A673 (cell line): ENCODE measurements at regions of chr1 and their contacts with region 1.

Region 1: DNA sequence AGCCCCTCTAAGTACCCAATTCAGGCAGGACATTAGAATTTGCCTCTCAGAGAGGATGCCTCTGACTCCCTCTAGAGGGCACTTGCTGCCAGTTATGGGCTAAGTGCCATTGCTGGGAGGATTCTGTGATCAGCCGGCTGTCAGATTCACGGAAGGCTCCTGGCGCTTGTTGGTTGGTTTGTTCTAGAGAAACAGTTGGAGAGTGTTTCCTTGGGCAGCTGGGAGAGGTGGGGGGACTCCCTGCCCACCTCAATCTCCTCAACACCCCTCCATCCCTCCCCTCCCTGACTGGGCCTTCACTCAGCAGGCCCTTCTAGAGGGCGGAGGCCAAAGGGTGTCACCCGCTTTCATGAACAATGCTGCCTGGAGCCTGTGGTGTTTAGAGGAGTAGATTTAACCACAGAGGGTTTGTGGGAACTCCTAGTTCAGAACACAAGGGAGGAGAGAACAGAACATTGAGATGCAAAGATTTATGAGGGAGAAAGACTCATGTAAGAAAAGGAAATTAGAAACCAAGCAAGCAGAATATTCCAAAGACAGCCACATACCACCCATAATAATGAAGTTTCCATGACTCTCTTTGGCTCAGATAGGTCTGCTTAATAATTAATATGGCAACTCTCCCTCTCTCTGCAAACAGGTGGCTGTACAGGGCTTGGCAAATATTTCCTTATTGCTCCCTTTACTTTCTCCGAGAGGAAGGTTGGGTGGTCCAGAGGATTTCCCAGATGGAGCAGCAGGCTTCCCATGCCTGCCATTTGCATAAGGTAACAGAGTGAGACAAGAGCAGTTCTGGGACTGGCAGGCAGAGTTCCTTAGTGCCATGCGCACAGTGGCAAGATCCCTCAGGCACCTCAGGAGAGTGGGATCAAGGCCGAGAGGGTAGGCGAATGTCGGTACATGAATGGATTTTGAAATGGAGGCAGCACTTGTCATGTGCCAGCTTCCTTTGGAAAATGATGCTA is 30.0 kb upstream of the ACP6 start:
- DNase-seq: peak; percentile 82
- H3K4me3 ChIP-seq: no peak overlapping the region
- H3K27ac ChIP-seq: no peak overlapping the region
- H3K4me1 ChIP-seq: no peaks in the 10 kb centered on the region
- H3K27me3 ChIP-seq: no peaks in the 10 kb centered on the region
- CTCF ChIP-seq: peak; percentile 92

Region 2: GRCh38 chr1:147640553-147641165 is 59.7 kb before region 1 on chr1:
- CTCF ChIA-PET with region 1: no interaction called
- POLR2A ChIA-PET with region 1: no interaction called
- intact Hi-C with region 1: loop called (anchors 2 kb)
- DNase-seq: peak; percentile 91
- H3K4me3 ChIP-seq: no peak overlapping the region
- H3K27ac ChIP-seq: no peak overlapping the region
- H3K4me1 ChIP-seq: no peaks in the 10 kb centered on the region
- H3K27me3 ChIP-seq: no peaks in the 10 kb centered on the region
- CTCF ChIP-seq: peak; percentile 81

Region 3: GRCh38 chr1:147762233-147763024 is 62.1 kb after region 1 on chr1:
- CTCF ChIA-PET with region 1: no interaction called
- POLR2A ChIA-PET with region 1: no interaction called
- intact Hi-C with region 1: loop called (anchors 10 kb)
- DNase-seq: peak; percentile 25
- H3K4me3 ChIP-seq: no peak overlapping the region
- H3K27ac ChIP-seq: no peak overlapping the region
- H3K4me1 ChIP-seq: no peaks in the 10 kb centered on the region
- H3K27me3 ChIP-seq: no peaks in the 10 kb centered on the region
- CTCF ChIP-seq: no peak

Region 4: GRCh38 chr1:147837129-147837963 is 137.0 kb after region 1 on chr1:
- CTCF ChIA-PET with region 1: no interaction called
- POLR2A ChIA-PET with region 1: no interaction called
- intact Hi-C with region 1: no loop called
- DNase-seq: no peak
- H3K4me3 ChIP-seq: no peak overlapping the region
- H3K27ac ChIP-seq: no peak overlapping the region
- H3K4me1 ChIP-seq: no peaks in the 10 kb centered on the region
- H3K27me3 ChIP-seq: no peaks in the 10 kb centered on the region
- CTCF ChIP-seq: no peak